ENCODE measurements at regions of chr13 and their contacts with region 1.

Region 1: DNA sequence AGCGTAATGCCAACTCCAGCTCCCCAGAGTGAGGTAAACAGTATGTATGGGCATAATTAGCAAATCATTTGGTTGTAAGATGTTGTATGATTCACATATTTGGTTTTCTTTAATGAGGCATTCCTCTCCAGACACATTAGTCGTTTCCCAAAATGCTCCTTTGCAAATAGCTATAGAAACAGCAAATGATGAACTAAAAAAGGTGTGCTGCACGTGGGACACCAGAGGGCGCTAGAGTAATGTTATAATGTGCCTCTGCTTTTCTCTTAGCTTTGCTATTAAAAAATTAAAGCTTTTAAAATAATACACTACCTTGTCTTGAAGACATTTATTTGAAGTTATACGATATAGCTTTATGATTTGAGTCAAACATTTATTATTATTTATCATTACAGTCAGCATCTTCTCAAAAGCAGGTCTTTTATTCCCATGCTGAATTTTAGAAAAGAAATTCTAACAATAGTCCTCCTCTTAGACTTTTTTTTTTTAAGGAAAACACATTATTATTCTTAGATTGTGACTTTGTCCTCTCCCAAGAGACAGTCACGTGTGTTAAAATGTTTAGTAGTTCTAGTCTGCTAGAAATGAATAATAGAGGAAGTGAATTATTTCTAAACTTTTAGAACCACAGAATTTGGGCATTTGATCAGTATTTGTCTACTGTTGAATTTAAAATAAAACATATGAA is 121.6 kb upstream of the FRY start:
- DNase-seq: peak; percentile 75
- ATAC-seq: peak; percentile 49
- H3K4me3 ChIP-seq: no peak overlapping the region
- H3K4me3 Mint-ChIP-seq: no peak overlapping the region
- H3K27ac ChIP-seq: peak overlapping the region in 1 of 2 donors; percentile 7
- H3K27ac Mint-ChIP-seq: no peak overlapping the region
- H3K4me1 ChIP-seq: peaks cover 4 to 7% of the 10 kb centered on the region in 2 donors
- H3K4me1 Mint-ChIP-seq: peaks cover 10% of the 10 kb centered on the region
- H3K27me3 ChIP-seq: no peaks in the 10 kb centered on the region
- H3K27me3 Mint-ChIP-seq: peaks cover 6% of the 10 kb centered on the region
- CTCF ChIP-seq: peak; percentile 97

Region 2: DNA sequence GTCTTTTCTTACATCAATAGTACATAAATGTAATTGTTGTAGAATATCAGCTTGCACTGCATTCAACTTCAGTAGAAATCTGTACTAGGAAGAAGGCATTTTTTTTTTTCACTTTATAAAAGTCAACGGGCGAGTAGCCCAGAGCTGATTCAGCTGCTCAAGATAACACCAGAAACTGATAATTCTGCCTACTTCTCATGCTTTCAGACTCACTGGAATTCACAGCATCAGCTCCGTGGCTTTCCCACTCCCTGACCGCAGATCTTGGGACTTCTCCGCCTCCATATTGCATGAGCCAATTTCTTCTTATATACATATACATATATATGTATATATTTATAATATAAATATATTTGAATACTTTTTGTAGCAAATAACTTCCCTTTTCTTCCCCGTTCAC is 433.7 kb before region 1 on chr13:
- CTCF ChIA-PET with region 1: no interaction called
- POLR2A ChIA-PET with region 1: no interaction called
- intact Hi-C with region 1: no loop called
- DNase-seq: no peak
- ATAC-seq: no peak
- H3K4me3 ChIP-seq: no peak overlapping the region
- H3K4me3 Mint-ChIP-seq: no peak overlapping the region
- H3K27ac ChIP-seq: no peak overlapping the region
- H3K27ac Mint-ChIP-seq: no peak overlapping the region
- H3K4me1 ChIP-seq: no peaks in the 10 kb centered on the region
- H3K4me1 Mint-ChIP-seq: no peaks in the 10 kb centered on the region
- H3K27me3 ChIP-seq: no peaks in the 10 kb centered on the region
- H3K27me3 Mint-ChIP-seq: no peaks in the 10 kb centered on the region
- CTCF ChIP-seq: no peak

Region 3: GRCh38 chr13:31846182-31846950 is 63.6 kb before region 1 on chr13:
- CTCF ChIA-PET with region 1: no interaction called
- POLR2A ChIA-PET with region 1: no interaction called
- intact Hi-C with region 1: no loop called
- DNase-seq: peak; percentile 76
- ATAC-seq: peak; percentile 98
- H3K4me3 ChIP-seq: peak overlapping the region; percentile 11 to 60 (median 48)
- H3K4me3 Mint-ChIP-seq: peak overlapping the region; percentile 91
- H3K27ac ChIP-seq: no peak overlapping the region
- H3K27ac Mint-ChIP-seq: peak overlapping the region; percentile 10
- H3K4me1 ChIP-seq: peaks cover 8 to 11% of the 10 kb centered on the region in 2 donors
- H3K4me1 Mint-ChIP-seq: peaks cover 19% of the 10 kb centered on the region
- H3K27me3 ChIP-seq: peaks cover 0 to 12% (median 11%) of the 10 kb centered on the region in 4 experiments
- H3K27me3 Mint-ChIP-seq: peaks cover 50% of the 10 kb centered on the region
- CTCF ChIP-seq: no peak

Region 4: GRCh38 chr13:31896427-31896826 is 13.6 kb before region 1 on chr13:
- CTCF ChIA-PET with region 1: interaction called, 19 read pairs
- POLR2A ChIA-PET with region 1: no interaction called
- intact Hi-C with region 1: no loop called
- DNase-seq: no peak
- ATAC-seq: peak; percentile 51
- H3K4me3 ChIP-seq: no peak overlapping the region
- H3K4me3 Mint-ChIP-seq: no peak overlapping the region
- H3K27ac ChIP-seq: no peak overlapping the region
- H3K27ac Mint-ChIP-seq: no peak overlapping the region
- H3K4me1 ChIP-seq: peaks cover 23 to 25% of the 10 kb centered on the region in 2 donors
- H3K4me1 Mint-ChIP-seq: peaks cover 18% of the 10 kb centered on the region
- H3K27me3 ChIP-seq: no peaks in the 10 kb centered on the region
- H3K27me3 Mint-ChIP-seq: no peaks in the 10 kb centered on the region
- CTCF ChIP-seq: no peak

Region 5: DNA sequence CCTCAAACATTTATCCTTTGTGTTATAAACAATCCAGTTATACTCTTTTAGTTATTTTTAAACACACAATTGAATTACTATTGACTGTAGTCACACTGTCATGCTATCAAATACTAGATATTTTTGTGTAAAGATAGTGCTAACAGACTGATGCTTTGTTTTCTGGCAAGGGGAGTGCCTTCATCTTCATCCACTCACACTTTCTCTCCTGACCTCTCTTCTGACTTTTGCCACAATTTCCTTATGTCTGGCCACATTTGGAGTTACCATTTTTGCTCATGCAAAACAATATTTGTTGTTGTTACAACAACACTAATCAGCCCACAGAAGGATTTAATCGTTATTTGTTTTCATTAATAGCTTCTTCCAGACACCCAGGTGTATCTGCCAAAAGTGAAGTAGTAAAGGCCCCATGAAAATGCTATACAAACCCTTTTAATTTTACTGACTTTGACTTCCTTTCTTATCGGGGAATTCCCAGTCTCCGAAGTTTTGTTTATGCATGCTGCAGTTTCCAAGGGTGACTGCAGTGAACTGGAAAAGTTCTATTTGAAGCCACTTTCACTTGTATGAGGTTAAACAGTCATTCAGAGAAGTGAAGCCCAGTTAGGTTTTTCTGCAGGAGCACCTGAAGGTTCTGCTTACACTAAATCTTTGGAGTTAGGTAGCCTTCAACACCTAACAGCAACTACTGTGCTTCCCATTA is 55.5 kb after region 1 on chr13:
- CTCF ChIA-PET with region 1: interaction called, 13 read pairs
- POLR2A ChIA-PET with region 1: no interaction called
- intact Hi-C with region 1: loop called (anchors 10 kb)
- DNase-seq: peak; percentile 88
- ATAC-seq: peak; percentile 87
- H3K4me3 ChIP-seq: peak overlapping the region in 2 of 5 experiments; percentile 5 to 6
- H3K4me3 Mint-ChIP-seq: peak overlapping the region; percentile 52
- H3K27ac ChIP-seq: peak overlapping the region; percentile 86 to 99
- H3K27ac Mint-ChIP-seq: peak overlapping the region; percentile 86
- H3K4me1 ChIP-seq: peaks cover 28 to 30% of the 10 kb centered on the region in 2 donors
- H3K4me1 Mint-ChIP-seq: peaks cover 31% of the 10 kb centered on the region
- H3K27me3 ChIP-seq: no peaks in the 10 kb centered on the region
- H3K27me3 Mint-ChIP-seq: no peaks in the 10 kb centered on the region
- CTCF ChIP-seq: no peak

Region 6: GRCh38 chr13:32164622-32165268 is 254.7 kb after region 1 on chr13:
- CTCF ChIA-PET with region 1: interaction called, 15 read pairs
- POLR2A ChIA-PET with region 1: no interaction called
- intact Hi-C with region 1: loop called (anchors 10 kb)
- DNase-seq: peak; percentile 39
- ATAC-seq: no peak
- H3K4me3 ChIP-seq: no peak overlapping the region
- H3K4me3 Mint-ChIP-seq: no peak overlapping the region
- H3K27ac ChIP-seq: no peak overlapping the region
- H3K27ac Mint-ChIP-seq: no peak overlapping the region
- H3K4me1 ChIP-seq: peaks cover 0 to 5% of the 10 kb centered on the region in 2 donors
- H3K4me1 Mint-ChIP-seq: peaks cover 9% of the 10 kb centered on the region
- H3K27me3 ChIP-seq: no peaks in the 10 kb centered on the region
- H3K27me3 Mint-ChIP-seq: no peaks in the 10 kb centered on the region
- CTCF ChIP-seq: no peak

Region 7: DNA sequence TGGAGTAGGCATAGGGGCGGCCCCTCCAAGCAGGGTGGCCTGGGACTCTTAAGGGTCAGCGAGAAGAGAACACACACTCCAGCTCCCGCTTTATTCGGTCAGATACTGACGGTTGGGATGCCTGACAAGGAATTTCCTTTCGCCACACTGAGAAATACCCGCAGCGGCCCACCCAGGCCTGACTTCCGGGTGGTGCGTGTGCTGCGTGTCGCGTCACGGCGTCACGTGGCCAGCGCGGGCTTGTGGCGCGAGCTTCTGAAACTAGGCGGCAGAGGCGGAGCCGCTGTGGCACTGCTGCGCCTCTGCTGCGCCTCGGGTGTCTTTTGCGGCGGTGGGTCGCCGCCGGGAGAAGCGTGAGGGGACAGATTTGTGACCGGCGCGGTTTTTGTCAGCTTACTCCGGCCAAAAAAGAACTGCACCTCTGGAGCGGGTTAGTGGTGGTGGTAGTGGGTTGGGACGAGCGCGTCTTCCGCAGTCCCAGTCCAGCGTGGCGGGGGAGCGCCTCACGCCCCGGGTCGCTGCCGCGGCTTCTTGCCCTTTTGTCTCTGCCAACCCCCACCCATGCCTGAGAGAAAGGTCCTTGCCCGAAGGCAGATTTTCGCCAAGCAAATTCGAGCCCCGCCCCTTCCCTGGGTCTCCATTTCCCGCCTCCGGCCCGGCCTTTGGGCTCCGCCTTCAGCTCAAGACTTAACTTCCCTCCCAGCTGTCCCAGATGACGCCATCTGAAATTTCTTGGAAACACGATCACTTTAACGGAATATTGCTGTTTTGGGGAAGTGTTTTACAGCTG is 405.4 kb after region 1 on chr13 and contains the starts of genes BRCA2 and ZAR1L:
- CTCF ChIA-PET with region 1: interaction called, 23 read pairs
- POLR2A ChIA-PET with region 1: interaction called, 6 read pairs
- intact Hi-C with region 1: loop called (anchors 1 kb)
- DNase-seq: peak; percentile 94
- ATAC-seq: peak; percentile 90
- H3K4me3 ChIP-seq: peak within 1 kb of the TSS; percentile 74 to 91 (median 82)
- H3K4me3 Mint-ChIP-seq: peak within 1 kb of the TSS; percentile 91
- H3K27ac ChIP-seq: peak within 1 kb of the TSS; percentile 99 to 100
- H3K27ac Mint-ChIP-seq: peak within 1 kb of the TSS; percentile 99
- H3K4me1 ChIP-seq: peaks cover 7 to 20% of the 10 kb centered on the region in 2 donors
- H3K4me1 Mint-ChIP-seq: peaks cover 15% of the 10 kb centered on the region
- H3K27me3 ChIP-seq: no peaks in the 10 kb centered on the region
- H3K27me3 Mint-ChIP-seq: no peaks in the 10 kb centered on the region
- CTCF ChIP-seq: no peak
- total RNA-seq, gene BRCA2: 6.0 and 7.5 TPM in 2 replicates
- total RNA-seq, gene ZAR1L: not detected in 2 replicates

Region 8: GRCh38 chr13:32581177-32581786 is 671.3 kb after region 1 on chr13:
- CTCF ChIA-PET with region 1: interaction called, 23 read pairs
- POLR2A ChIA-PET with region 1: no interaction called
- intact Hi-C with region 1: no loop called
- DNase-seq: peak; percentile 42
- ATAC-seq: no peak
- H3K4me3 ChIP-seq: no peak overlapping the region
- H3K4me3 Mint-ChIP-seq: no peak overlapping the region
- H3K27ac ChIP-seq: no peak overlapping the region
- H3K27ac Mint-ChIP-seq: no peak overlapping the region
- H3K4me1 ChIP-seq: peaks cover 7 to 8% of the 10 kb centered on the region in 2 donors
- H3K4me1 Mint-ChIP-seq: peaks cover 8% of the 10 kb centered on the region
- H3K27me3 ChIP-seq: peaks cover 0 to 6% (median 0%) of the 10 kb centered on the region in 4 experiments
- H3K27me3 Mint-ChIP-seq: no peaks in the 10 kb centered on the region
- CTCF ChIP-seq: peak; percentile 74